Panc1 (cell line): ENCODE measurements at regions of chr15 and their contacts with region 1.

Region 1: GRCh38 chr15:68559345-68560310 is 19.2 kb upstream of the CORO2B start:
- DNase-seq: peak; percentile 35
- ATAC-seq: peak; percentile 96
- H3K4me3 ChIP-seq: peak overlapping the region; percentile 30 to 52
- H3K27ac ChIP-seq: no peak overlapping the region
- H3K4me1 ChIP-seq: no peaks in the 10 kb centered on the region; the same call in 1 of the 2 replicates
- H3K27me3 ChIP-seq: no peaks in the 10 kb centered on the region; the same call in 1 of the 2 replicates
- CTCF ChIP-seq: peak; percentile 97

Region 2: GRCh38 chr15:68271854-68272471 is 287.7 kb before region 1 on chr15:
- CTCF ChIA-PET with region 1: interaction called, 16 read pairs
- POLR2A ChIA-PET with region 1: no interaction called
- in situ Hi-C with region 1: no loop called
- intact Hi-C with region 1: no loop called
- DNase-seq: no peak
- ATAC-seq: peak; percentile 70
- H3K4me3 ChIP-seq: no peak overlapping the region
- H3K27ac ChIP-seq: peak overlapping the region; percentile 37; the same call in 1 of the 2 replicates
- H3K4me1 ChIP-seq: peaks cover 18% of the 10 kb centered on the region
- H3K27me3 ChIP-seq: no peaks in the 10 kb centered on the region
- CTCF ChIP-seq: no peak

Region 3: DNA sequence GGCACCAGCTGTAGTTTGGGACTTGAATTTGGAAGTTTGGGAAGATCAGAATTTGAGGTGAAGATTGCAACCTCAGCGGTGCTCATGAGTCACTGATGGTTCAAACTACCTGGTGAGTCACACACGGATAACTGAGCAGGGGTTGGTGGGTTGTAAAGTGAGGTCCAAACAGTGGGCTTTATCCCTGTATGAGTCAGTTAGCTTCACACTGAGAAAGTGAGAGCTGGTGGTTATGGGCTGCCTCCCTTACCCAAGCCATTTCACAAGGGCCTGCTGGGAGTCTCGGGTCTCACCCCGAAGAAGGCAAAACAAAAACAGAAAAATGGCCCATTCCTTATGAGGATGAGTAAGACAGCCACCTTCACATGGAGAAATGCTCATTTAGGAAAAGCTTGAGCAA is 204.7 kb before region 1 on chr15:
- CTCF ChIA-PET with region 1: no interaction called
- POLR2A ChIA-PET with region 1: no interaction called
- in situ Hi-C with region 1: no loop called
- intact Hi-C with region 1: no loop called
- DNase-seq: peak; percentile 10
- ATAC-seq: peak; percentile 18; the same call in 1 of the 2 replicates
- H3K4me3 ChIP-seq: no peak overlapping the region
- H3K27ac ChIP-seq: no peak overlapping the region
- H3K4me1 ChIP-seq: peaks cover 3% of the 10 kb centered on the region; the same call in 1 of the 2 replicates
- H3K27me3 ChIP-seq: no peaks in the 10 kb centered on the region
- CTCF ChIP-seq: no peak

Region 4: DNA sequence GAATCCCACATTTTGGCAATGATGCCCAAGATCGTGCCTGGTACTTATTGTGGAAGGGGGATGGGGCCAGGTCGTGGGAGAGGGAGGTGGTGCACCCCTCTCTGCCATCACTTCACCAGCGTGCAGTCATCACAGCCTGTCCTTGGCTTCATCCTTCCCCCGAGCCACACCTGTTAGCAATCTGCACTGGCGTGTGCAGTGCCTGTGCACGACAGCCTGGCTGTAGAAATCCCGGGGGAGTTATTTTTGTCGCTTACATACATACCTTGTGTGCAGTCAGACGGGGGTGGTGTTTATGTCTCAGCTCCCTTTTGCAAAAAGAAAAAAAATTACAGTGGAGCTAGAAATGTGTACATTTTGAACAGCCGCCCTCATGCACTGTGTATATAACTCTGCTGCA is 1322.1 kb after region 1 on chr15:
- CTCF ChIA-PET with region 1: no interaction called
- POLR2A ChIA-PET with region 1: no interaction called
- in situ Hi-C with region 1: no loop called
- intact Hi-C with region 1: no loop called
- DNase-seq: no peak
- ATAC-seq: no peak
- H3K4me3 ChIP-seq: no peak overlapping the region
- H3K27ac ChIP-seq: no peak overlapping the region
- H3K4me1 ChIP-seq: no peaks in the 10 kb centered on the region
- H3K27me3 ChIP-seq: no peaks in the 10 kb centered on the region
- CTCF ChIP-seq: no peak